HepG2 (cell line): ENCODE measurements at regions of chr19 and their contacts with region 1.

Region 1: DNA sequence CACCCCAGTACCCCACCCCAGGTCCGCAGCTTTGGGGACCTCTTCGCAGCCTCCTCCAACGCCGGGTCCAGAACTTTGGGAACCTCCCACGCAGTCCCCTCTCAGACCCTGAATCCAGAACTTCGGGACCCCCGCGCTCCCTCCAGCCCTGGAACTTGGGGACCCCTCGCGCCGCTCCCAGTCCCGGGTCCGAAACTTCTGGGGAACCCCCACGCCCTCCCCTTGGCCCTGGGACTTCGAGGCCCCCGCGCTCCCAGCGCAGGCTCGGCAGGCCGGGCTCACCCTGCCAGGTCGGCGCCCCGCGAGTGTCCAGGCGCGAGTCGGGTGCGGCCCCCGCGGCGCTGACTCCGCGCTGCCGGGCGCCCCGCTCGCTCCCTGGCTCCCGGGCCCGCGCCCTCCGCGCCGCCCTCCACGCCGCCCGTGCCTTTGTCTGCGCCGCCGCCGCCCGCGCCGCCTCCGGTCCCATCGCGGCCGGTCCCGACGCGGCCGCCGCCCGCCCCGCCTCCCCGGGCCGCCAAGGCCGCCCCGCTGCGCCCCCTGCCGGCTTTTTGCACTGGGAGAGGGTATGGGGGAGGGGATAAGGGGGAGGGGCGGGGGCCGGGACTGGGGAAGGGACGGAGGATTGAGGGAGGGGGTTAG is at the start of gene HOMER3:
- DNase-seq: no peak
- ATAC-seq: peak; percentile 56
- H3K4me3 ChIP-seq: peak within 1 kb of the TSS; percentile 60 to 85 (median 74)
- H3K27ac ChIP-seq: no peak within 1 kb of the TSS
- H3K4me1 ChIP-seq: peaks cover 52% of the 10 kb centered on the region
- H3K27me3 ChIP-seq: no peaks in the 10 kb centered on the region
- CTCF ChIP-seq: peak; percentile 15; the same call in 1 of the 2 replicates
- EP300 ChIP-seq: no peak
- POLR2A ChIP-seq: no peak
- RAD21 ChIP-seq: 0 out of 2 replicates have a peak, but pooled peaks have one; percentile 10
- total RNA-seq, gene HOMER3: 16.0 and 21.3 TPM in 2 replicates

Region 2: GRCh38 chr19:18865973-18866799 is 74.7 kb before region 1 on chr19:
- CTCF ChIA-PET with region 1: no interaction called
- POLR2A ChIA-PET with region 1: no interaction called
- in situ Hi-C with region 1: no loop called
- intact Hi-C with region 1: no loop called
- DNase-seq: peak; percentile 35
- ATAC-seq: peak; percentile 85
- H3K4me3 ChIP-seq: no peak overlapping the region
- H3K27ac ChIP-seq: no peak overlapping the region
- H3K4me1 ChIP-seq: peaks cover 7% of the 10 kb centered on the region
- H3K27me3 ChIP-seq: no peaks in the 10 kb centered on the region
- CTCF ChIP-seq: peak; percentile 85
- EP300 ChIP-seq: no peak
- POLR2A ChIP-seq: no peak
- RAD21 ChIP-seq: peak; percentile 78

Region 3: GRCh38 chr19:18961767-18962620 is 21.1 kb after region 1 on chr19:
- CTCF ChIA-PET with region 1: no interaction called
- POLR2A ChIA-PET with region 1: no interaction called
- in situ Hi-C with region 1: no loop called
- intact Hi-C with region 1: loop called (anchors 2 kb)
- DNase-seq: peak; percentile 83
- ATAC-seq: peak; percentile 91
- H3K4me3 ChIP-seq: peak overlapping the region in 1 of 3 experiments; percentile 48; a peak in 1 of 6 replicates
- H3K27ac ChIP-seq: no peak overlapping the region
- H3K4me1 ChIP-seq: peaks cover 47% of the 10 kb centered on the region
- H3K27me3 ChIP-seq: no peaks in the 10 kb centered on the region; a peak in 1 of 5 replicates
- CTCF ChIP-seq: peak; percentile 52
- EP300 ChIP-seq: no peak
- POLR2A ChIP-seq: no peak
- RAD21 ChIP-seq: no peak

Region 4: GRCh38 chr19:18995804-18996241 is 54.9 kb after region 1 on chr19:
- CTCF ChIA-PET with region 1: no interaction called
- POLR2A ChIA-PET with region 1: no interaction called
- in situ Hi-C with region 1: no loop called
- intact Hi-C with region 1: no loop called
- DNase-seq: peak; percentile 57
- ATAC-seq: peak; percentile 88
- H3K4me3 ChIP-seq: no peak overlapping the region
- H3K27ac ChIP-seq: no peak overlapping the region
- H3K4me1 ChIP-seq: no peaks in the 10 kb centered on the region
- H3K27me3 ChIP-seq: no peaks in the 10 kb centered on the region
- CTCF ChIP-seq: peak; percentile 56
- EP300 ChIP-seq: no peak
- POLR2A ChIP-seq: no peak
- RAD21 ChIP-seq: peak; percentile 27; the same call in 1 of the 2 replicates